ENCODE measurements at regions of chr1 and their contacts with region 1.

Region 1: GRCh38 chr1:211514030-211514754 is 22.2 kb upstream of the RD3 start:
- DNase-seq: peak; percentile 81
- H3K4me3 ChIP-seq: no peak overlapping the region
- H3K27ac ChIP-seq: no peak overlapping the region
- H3K4me1 ChIP-seq: peaks cover 45% of the 10 kb centered on the region
- H3K27me3 ChIP-seq: no peaks in the 10 kb centered on the region
- CTCF ChIP-seq: peak; percentile 61 to 88

Region 2: DNA sequence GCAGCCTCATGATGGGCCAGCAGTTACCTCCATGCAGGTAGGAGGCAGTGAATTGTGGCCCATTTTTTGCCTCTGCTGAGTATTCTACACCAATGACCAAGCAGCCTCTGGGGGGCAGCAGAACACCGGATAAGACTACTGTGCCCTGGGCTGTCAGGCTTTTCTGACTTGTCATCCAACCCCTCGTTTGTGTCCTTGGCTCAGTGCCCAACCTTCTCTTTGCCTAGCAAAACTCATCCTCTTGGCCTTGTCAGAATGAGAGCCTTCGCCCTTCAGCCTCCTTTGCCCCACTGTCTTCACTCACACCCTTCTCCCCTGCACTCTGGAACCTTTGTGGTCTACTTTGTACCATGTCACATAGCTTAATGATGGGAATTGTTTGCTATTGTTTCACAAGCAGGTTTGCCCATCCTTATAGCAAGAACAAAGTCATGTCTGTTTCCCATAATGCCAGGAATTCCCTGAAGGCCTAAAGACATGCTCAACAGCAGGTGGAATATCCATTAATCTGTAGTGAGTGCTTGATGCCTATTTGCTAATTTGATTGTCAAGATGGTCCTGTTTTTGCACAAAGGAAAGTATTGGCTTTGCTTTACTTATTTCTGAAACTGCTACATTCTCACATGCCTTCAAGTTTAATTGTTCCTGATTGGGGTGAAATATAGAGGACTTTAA is 929.6 kb before region 1 on chr1:
- CTCF ChIA-PET with region 1: no interaction called
- dilution Hi-C with region 1: no loop called
- in situ Hi-C with region 1: no loop called
- intact Hi-C with region 1: loop called (anchors 5 kb)
- DNase-seq: peak; percentile 62
- H3K4me3 ChIP-seq: no peak overlapping the region
- H3K27ac ChIP-seq: no peak overlapping the region
- H3K4me1 ChIP-seq: no peaks in the 10 kb centered on the region
- H3K27me3 ChIP-seq: no peaks in the 10 kb centered on the region
- CTCF ChIP-seq: peak; percentile 75 to 78

Region 3: DNA sequence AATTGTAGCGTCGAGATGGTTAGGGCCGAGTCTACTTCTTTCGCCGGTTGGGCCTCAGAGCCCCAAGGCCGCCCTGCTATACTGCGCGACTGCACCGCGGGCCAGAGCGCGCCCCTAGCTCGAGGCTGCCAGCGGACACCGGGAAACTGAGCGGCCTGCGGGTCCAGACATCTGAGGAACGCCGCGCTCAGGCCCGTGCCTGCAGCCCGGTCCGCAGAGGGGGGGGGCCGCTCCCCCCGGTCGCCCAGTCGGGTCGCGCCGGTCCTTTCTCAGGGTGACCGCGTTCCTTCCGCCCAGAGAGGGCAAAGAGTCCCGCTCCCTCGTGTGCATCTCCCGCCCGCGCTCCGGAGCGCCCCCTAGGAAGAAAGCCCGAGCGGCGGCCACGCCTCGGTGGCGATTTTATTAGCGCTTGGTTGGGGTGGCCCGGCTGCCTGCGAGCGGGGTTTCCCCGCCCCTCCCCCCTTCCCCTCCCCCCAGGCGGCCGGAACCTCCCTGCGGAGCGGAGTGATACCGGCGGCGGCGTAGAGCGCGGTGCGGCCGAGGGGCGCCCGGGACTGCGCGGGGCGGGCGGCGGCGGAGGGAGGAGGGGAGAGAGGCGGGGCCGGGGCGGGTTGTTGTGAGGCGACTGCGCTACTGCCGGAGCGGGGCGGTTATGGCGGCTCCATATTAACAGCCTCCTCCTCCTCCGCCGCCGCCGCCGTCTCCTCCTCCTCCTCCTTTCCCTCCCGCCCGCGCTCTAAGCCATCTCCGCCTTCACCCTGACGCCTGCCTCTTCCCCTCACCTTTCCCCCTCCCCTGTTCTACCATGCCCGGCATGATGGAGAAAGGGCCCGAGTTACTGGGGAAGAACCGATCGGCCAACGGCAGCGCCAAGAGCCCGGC is 255.2 kb before region 1 on chr1 and contains the start of gene RCOR3:
- CTCF ChIA-PET with region 1: no interaction called
- dilution Hi-C with region 1: no loop called
- in situ Hi-C with region 1: no loop called
- intact Hi-C with region 1: loop called (anchors 5 kb)
- DNase-seq: peak; percentile 90
- H3K4me3 ChIP-seq: peak within 1 kb of the TSS; percentile 97 to 99 (median 97)
- H3K27ac ChIP-seq: peak within 1 kb of the TSS; percentile 87
- H3K4me1 ChIP-seq: peaks cover 18% of the 10 kb centered on the region
- H3K27me3 ChIP-seq: no peaks in the 10 kb centered on the region
- CTCF ChIP-seq: peak; percentile 31 to 65
- total RNA-seq, gene RCOR3: 32.8 to 34.5 TPM

Region 4: GRCh38 chr1:211469938-211470529 is 44.2 kb before region 1 on chr1:
- CTCF ChIA-PET with region 1: no interaction called
- dilution Hi-C with region 1: loop called (anchors 5 kb)
- in situ Hi-C with region 1: no loop called
- intact Hi-C with region 1: loop called (anchors 1 kb)
- DNase-seq: peak; percentile 60
- H3K4me3 ChIP-seq: no peak overlapping the region
- H3K27ac ChIP-seq: no peak overlapping the region
- H3K4me1 ChIP-seq: no peaks in the 10 kb centered on the region
- H3K27me3 ChIP-seq: peaks cover 2% of the 10 kb centered on the region
- CTCF ChIP-seq: peak; percentile 86 to 88

Region 5: DNA sequence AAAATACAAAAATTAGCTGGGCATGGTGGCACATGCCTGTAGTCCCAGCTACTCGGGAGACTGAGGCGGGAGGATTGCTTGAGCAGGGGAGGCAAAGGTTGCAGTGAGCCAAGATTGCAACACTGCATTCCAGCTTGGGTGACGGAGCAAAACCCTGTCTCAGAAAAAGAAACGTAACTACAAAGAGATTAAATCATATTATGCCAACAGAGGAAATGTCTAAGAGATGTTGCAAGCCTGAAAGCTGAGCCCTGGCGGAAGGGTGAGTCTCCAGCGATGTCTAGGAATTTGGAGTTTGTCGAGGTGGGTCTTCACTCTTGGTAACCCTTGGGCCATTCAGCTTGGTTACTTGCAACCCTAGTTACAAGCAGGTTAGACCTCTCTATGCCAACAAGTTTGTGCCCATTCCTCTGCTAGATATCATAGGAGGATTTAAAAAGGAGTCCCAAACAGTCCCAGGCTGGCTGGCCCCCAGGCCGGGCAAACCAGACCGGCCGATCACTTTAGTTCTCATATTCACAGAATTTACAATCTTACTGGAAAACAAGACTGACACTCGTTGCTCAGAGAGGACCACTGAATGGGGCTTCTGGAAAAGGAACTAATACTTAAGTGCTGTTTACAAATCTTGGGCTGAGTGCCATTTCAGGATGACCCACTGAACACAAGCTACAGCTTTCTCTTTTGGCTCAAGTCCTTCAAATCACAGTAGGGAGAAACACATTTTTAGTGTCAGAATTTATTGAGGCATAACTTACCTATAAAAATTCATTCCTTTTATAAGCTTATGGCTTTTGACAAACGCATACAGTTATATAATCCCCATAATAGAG is 37.7 kb after region 1 on chr1:
- CTCF ChIA-PET with region 1: no interaction called
- dilution Hi-C with region 1: loop called (anchors 5 kb)
- in situ Hi-C with region 1: no loop called
- intact Hi-C with region 1: no loop called
- DNase-seq: peak; percentile 81
- H3K4me3 ChIP-seq: no peak overlapping the region
- H3K27ac ChIP-seq: no peak overlapping the region
- H3K4me1 ChIP-seq: peaks cover 7% of the 10 kb centered on the region
- H3K27me3 ChIP-seq: no peaks in the 10 kb centered on the region
- CTCF ChIP-seq: no peak

Region 6: DNA sequence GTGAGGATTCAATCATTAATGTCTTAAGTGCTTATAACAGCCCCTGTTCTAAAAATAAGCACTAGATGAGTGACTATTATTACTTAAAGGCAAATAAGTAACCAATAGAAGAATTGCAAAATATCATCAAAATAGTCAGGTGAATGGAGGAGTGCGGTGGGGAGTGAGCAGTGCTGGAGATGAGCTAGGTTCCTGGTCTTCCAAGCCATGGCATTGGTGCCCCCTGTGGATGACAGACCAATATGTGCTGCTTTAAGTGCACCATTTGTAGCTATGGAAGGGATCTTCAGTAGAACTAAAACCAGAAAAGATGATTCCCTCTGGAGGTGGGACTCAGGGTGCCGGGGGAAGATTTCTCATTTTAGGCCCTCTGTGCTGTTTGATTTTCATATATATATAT is 110.8 kb after region 1 on chr1:
- CTCF ChIA-PET with region 1: no interaction called
- dilution Hi-C with region 1: no loop called
- in situ Hi-C with region 1: no loop called
- intact Hi-C with region 1: loop called (anchors 1 kb)
- DNase-seq: peak; percentile 25
- H3K4me3 ChIP-seq: no peak overlapping the region
- H3K27ac ChIP-seq: no peak overlapping the region
- H3K4me1 ChIP-seq: no peaks in the 10 kb centered on the region
- H3K27me3 ChIP-seq: peaks cover 6% of the 10 kb centered on the region
- CTCF ChIP-seq: peak; percentile 35 to 57